Dorsolateral prefrontal cortex (tissue), 120 donors: ENCODE measurements at regions of chr9 and their contacts with region 1.

Region 1: DNA sequence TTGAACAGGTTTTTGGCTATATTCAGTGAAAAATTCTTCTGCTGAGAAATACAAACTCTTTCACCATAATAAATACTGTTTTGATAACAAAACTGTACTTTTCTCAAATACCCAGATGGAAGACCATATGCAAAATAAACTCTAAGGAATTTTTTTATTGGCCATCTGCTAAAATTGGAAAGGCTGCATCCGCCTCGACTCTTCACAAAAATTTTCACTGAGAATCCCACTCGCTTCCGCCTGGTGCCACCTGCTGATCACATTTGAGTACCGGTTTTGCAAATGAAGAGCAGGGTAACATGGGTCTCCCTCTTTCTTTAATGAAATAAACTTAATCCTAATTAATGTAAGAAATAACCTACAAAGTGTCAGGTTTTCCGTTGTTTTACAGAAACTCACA is 76.4 kb downstream of the TTLL11 start:
- DNase-seq: peak in 6 of 10 donors; percentile 47 to 67 (median 56)
- H3K4me3 ChIP-seq: peak overlapping the region in 3 of 59 donors; percentile 4 to 7 (median 4)
- H3K27ac ChIP-seq: peak overlapping the region in 39 of 59 donors; percentile 6 to 73 (median 44)
- H3K27me3 ChIP-seq: no peaks in the 10 kb centered on the region
- CTCF ChIP-seq: peak in 54 of 56 donors; percentile 34 to 75 (median 56)

Region 2: GRCh38 chr9:122084026-122084675 is 67.4 kb after region 1 on chr9:
- intact Hi-C with region 1: loop called in 1 of 2 experiments (anchors 5 kb)
- DNase-seq: no peak
- H3K4me3 ChIP-seq: peak overlapping the region in 56 of 59 donors; percentile 1 to 57 (median 34)
- H3K27ac ChIP-seq: peak overlapping the region; percentile 56 to 98 (median 93)
- H3K27me3 ChIP-seq: no peaks in the 10 kb centered on the region
- CTCF ChIP-seq: peak in 1 of 56 donors; percentile 7